Panc1 (cell line): ENCODE measurements at regions of chr3 and their contacts with region 1.

Region 1: DNA sequence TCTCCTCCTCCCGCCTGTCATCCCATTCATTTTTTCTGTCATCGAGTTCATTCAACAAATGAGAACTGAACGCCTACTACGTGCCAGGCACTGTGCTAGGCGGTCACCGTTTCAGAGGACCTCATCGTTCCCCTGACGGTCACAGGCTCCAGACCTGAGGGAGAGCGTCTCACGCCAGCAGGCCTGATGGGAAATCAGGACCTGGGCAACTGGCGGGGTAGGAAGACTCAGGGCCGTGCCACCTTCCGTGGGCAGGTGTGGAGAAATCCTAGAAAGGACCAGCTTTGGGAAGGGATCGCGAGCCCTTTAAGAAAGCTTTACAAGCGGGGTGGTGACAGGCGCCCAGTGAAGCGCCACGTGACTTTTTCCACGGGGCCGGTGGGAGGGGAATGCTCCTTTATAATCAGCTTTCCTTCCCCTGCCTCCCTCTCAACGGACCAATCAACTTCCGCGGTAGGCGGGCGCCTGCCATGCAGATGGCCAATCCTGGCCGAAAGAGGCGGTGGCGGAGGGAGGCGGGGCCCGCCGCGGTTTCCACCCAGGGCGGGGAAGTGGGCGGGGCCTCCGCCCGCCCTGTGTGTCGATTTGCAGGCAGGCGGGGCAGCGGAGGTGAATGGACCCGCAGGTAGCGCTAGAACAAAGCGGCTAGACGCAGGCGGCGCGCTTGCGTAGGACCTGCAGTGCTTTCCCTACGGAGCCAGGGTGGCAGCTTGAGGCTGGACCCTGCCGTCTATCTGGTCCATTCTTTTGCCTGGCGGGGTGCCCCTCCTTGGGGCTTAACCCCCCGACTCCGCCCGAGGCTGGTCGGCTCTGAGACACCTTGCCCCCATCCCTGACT is 816 bp upstream of the DUSP7 start:
- DNase-seq: peak; percentile 83
- ATAC-seq: peak; percentile 89
- H3K4me3 ChIP-seq: peak overlapping the region; percentile 55 to 60
- H3K27ac ChIP-seq: peak overlapping the region; percentile 83
- H3K4me1 ChIP-seq: peaks cover 11% of the 10 kb centered on the region
- H3K27me3 ChIP-seq: no peaks in the 10 kb centered on the region
- CTCF ChIP-seq: no peak

Region 2: DNA sequence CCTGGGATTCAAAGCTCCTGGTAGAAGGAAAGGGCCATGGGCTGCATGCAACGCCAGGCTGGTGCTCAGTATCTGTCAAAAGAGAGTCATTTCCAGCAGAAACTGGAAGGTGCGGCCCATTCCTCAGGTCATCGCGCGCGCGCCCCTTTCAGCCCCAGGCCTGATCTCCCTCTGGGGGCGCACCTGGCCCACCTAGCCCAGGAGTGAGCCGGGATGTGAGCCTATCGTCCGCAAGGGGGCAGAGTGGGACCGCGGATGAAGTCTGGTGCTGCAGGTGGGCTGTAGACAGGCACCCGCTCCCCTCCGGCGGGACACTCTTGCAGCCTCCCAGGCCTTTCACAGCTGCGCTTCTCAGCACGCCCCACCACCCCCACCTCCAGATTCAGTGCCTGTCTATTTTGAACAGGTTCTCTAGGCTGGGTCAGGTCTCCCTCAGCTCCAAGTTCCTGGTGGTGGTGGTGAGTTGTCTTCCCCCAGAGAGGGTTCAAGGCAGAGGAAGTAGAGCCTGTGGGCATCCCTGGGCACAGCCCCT is 55.7 kb before region 1 on chr3:
- CTCF ChIA-PET with region 1: interaction called, 7 read pairs
- POLR2A ChIA-PET with region 1: no interaction called
- in situ Hi-C with region 1: no loop called
- intact Hi-C with region 1: loop called (anchors 10 kb)
- DNase-seq: no peak
- ATAC-seq: peak; percentile 89
- H3K4me3 ChIP-seq: no peak overlapping the region
- H3K27ac ChIP-seq: no peak overlapping the region
- H3K4me1 ChIP-seq: peaks cover 5% of the 10 kb centered on the region
- H3K27me3 ChIP-seq: no peaks in the 10 kb centered on the region
- CTCF ChIP-seq: peak; percentile 92

Region 3: DNA sequence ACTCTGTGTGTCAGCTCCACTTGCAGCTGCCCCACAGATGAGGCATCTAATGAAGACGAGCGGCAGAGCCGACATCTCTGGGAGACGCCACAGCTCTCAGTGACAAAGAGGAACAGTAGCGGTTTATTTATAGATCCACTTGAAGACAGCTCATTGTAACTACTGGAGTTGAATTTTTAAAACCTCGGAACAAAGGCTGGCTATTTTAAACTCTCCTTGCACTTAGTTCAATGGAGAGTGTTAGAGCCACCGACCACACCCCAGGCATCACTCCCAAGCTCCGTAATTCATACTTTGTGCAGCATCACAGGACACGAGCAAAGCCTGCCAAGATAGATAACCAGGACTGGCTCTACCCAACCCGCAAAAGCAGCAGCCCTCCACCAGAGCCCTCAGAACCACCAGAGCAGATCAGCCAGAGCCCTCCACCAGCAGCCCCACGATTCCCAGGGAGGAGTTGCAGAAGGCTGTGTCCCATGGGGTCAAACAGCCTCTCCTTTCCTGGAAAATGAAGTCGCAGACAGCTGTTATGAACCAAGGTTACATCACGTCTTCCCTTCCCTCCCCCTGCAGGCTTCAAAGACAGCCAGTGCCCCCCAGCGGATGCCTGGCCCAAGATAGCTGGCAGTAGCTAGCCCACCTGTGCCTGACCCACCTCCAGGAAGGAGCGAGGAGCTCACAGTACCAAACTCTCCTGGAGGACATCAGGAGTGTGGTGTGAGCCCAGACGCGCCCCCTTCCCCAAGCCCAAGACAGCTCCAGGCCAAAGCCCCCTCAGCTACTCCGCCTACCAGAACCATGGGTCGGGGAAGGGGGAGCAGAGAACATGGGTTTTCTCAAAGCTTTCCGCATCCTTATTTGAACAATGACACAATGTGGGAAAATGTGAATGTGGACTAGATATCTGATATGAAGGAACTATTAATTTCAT is 51.4 kb after region 1 on chr3:
- CTCF ChIA-PET with region 1: no interaction called
- POLR2A ChIA-PET with region 1: no interaction called
- in situ Hi-C with region 1: no loop called
- intact Hi-C with region 1: no loop called
- DNase-seq: no peak
- ATAC-seq: no peak
- H3K4me3 ChIP-seq: no peak overlapping the region
- H3K27ac ChIP-seq: no peak overlapping the region
- H3K4me1 ChIP-seq: no peaks in the 10 kb centered on the region
- H3K27me3 ChIP-seq: no peaks in the 10 kb centered on the region
- CTCF ChIP-seq: no peak

Region 4: GRCh38 chr3:52123106-52123725 is 66.0 kb after region 1 on chr3:
- CTCF ChIA-PET with region 1: interaction called, 3 read pairs
- POLR2A ChIA-PET with region 1: no interaction called
- in situ Hi-C with region 1: no loop called
- intact Hi-C with region 1: loop called (anchors 10 kb)
- DNase-seq: peak; percentile 30
- ATAC-seq: peak; percentile 76; the same call in 1 of the 2 replicates
- H3K4me3 ChIP-seq: no peak overlapping the region
- H3K27ac ChIP-seq: no peak overlapping the region
- H3K4me1 ChIP-seq: peaks cover 2% of the 10 kb centered on the region; the same call in 1 of the 2 replicates
- H3K27me3 ChIP-seq: no peaks in the 10 kb centered on the region
- CTCF ChIP-seq: peak; percentile 88